ENCODE measurements at regions of chr4 and their contacts with region 1.

Region 1: DNA sequence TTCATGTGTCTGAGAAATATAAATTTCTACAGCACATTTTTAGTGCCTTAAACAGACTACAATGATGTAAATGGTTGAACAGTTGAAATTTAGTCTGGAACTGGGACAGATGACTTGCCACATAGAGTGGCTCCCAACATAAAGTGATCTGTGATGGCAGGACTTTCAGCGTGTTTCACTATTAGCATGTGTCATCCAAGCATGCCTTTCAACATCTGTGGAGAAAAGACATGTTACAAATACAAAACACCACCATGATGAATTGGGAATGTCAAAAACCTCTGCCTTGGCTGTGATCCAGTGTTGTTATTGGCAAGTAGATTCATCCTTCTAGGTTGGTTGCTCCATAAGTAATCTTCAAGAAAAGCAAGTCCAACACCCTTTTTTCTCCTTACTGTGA is 348.7 kb downstream of the MAPK10 start:
- DNase-seq: peak in 1 of 2 donors; percentile 79
- H3K4me3 ChIP-seq: no peak overlapping the region
- H3K27ac ChIP-seq: no peak overlapping the region
- H3K4me1 ChIP-seq: peaks cover 0 to 24% of the 10 kb centered on the region in 2 donors
- H3K27me3 ChIP-seq: no peaks in the 10 kb centered on the region
- CTCF ChIP-seq: no peak

Region 2: DNA sequence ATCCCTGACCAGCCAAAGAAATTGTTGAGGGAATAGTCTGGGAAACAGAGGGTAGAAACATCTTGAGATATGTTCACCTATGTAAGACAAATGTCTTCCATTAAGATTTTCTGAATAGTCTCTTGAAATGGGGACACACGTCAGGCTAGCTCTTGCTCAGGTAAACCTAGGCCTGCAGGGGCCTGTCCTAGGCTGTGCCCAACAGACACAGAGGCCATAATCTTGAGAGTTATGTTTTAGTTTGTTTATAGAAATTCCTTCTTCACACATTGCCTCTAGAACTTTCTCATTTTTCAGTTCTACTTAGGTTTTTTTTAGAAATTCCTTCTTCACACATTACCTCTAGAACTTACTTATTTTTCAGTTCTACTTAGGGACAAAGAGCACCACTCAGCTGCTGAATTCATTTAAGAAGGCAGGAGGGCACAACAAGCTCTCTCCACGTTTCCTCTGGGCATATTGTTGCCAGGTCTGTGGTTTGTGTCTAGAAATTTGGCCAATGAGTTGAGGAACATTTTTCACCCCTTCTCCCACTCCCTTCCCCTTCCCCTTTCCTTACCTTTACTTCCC is 441.3 kb before region 1 on chr4:
- intact Hi-C with region 1: no loop called
- DNase-seq: no peak
- H3K4me3 ChIP-seq: no peak overlapping the region
- H3K27ac ChIP-seq: no peak overlapping the region
- H3K4me1 ChIP-seq: no peaks in the 10 kb centered on the region
- H3K27me3 ChIP-seq: no peaks in the 10 kb centered on the region
- CTCF ChIP-seq: no peak

Region 3: GRCh38 chr4:85946821-85947220 is 64.3 kb before region 1 on chr4:
- intact Hi-C with region 1: no loop called
- DNase-seq: no peak
- H3K4me3 ChIP-seq: no peak overlapping the region
- H3K27ac ChIP-seq: no peak overlapping the region
- H3K4me1 ChIP-seq: no peaks in the 10 kb centered on the region
- H3K27me3 ChIP-seq: no peaks in the 10 kb centered on the region
- CTCF ChIP-seq: no peak

Region 4: DNA sequence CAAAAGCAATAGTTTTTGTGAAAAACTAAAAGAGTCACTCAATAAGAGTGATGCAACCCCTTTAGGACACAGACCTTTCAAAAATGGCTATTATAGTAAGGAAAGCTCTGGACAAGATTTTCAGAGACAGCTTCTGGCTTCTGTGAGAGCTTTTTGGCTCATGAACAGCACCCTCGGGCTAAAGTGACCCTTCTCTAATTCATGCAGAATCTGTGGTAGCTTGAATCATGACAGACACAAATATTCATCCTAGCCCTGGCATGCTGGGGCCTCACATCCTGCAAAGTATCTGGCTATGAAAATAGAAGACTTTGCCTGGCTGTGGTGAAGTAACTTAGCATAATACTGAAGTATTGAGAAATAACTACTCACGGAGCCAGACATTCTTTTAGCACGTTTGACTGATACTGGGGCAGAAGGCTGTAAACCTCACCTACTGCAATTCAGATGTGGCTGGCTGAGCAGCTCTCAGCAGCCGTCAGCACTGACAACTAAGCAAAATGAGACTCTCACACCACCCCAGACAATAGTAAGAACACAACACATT is 21.4 kb after region 1 on chr4:
- intact Hi-C with region 1: loop called (anchors 2 kb)
- DNase-seq: peak in 1 of 2 donors; percentile 77
- H3K4me3 ChIP-seq: peak overlapping the region in 1 of 2 donors; percentile 53
- H3K27ac ChIP-seq: peak overlapping the region; percentile 82 to 95
- H3K4me1 ChIP-seq: peaks cover 0 to 9% of the 10 kb centered on the region in 2 donors
- H3K27me3 ChIP-seq: no peaks in the 10 kb centered on the region
- CTCF ChIP-seq: no peak

Region 5: GRCh38 chr4:86233681-86234080 is 222.6 kb after region 1 on chr4:
- intact Hi-C with region 1: no loop called
- DNase-seq: no peak
- H3K4me3 ChIP-seq: no peak overlapping the region
- H3K27ac ChIP-seq: no peak overlapping the region
- H3K4me1 ChIP-seq: no peaks in the 10 kb centered on the region
- H3K27me3 ChIP-seq: no peaks in the 10 kb centered on the region
- CTCF ChIP-seq: no peak

Region 6: GRCh38 chr4:86809809-86810208 is 798.7 kb after region 1 on chr4:
- intact Hi-C with region 1: no loop called
- DNase-seq: no peak
- H3K4me3 ChIP-seq: no peak overlapping the region
- H3K27ac ChIP-seq: no peak overlapping the region
- H3K4me1 ChIP-seq: no peaks in the 10 kb centered on the region
- H3K27me3 ChIP-seq: no peaks in the 10 kb centered on the region
- CTCF ChIP-seq: no peak